ENCODE measurements at regions of chr16 and their contacts with region 1.

Region 1: GRCh38 chr16:53346-54236 is at the starts of genes POLR3K and SNRNP25:
- DNase-seq: peak; percentile 95 to 99 (median 98)
- ATAC-seq: peak; percentile 95
- H3K4me3 ChIP-seq: peak within 1 kb of the TSS; percentile 86
- H3K4me3 Mint-ChIP-seq: peak within 1 kb of the TSS; percentile 94
- H3K27ac ChIP-seq: peak within 1 kb of the TSS; percentile 25 to 31
- H3K27ac Mint-ChIP-seq: peak within 1 kb of the TSS; percentile 72
- H3K4me1 ChIP-seq: peaks cover 33% of the 10 kb centered on the region
- H3K4me1 Mint-ChIP-seq: peaks cover 32% of the 10 kb centered on the region
- H3K27me3 ChIP-seq: no peaks in the 10 kb centered on the region
- H3K27me3 Mint-ChIP-seq: no peaks in the 10 kb centered on the region
- CTCF ChIP-seq: no peak
- total RNA-seq, gene POLR3K: 4.1 TPM
- total RNA-seq, gene SNRNP25: 4.8 to 5.1 TPM

Region 2: DNA sequence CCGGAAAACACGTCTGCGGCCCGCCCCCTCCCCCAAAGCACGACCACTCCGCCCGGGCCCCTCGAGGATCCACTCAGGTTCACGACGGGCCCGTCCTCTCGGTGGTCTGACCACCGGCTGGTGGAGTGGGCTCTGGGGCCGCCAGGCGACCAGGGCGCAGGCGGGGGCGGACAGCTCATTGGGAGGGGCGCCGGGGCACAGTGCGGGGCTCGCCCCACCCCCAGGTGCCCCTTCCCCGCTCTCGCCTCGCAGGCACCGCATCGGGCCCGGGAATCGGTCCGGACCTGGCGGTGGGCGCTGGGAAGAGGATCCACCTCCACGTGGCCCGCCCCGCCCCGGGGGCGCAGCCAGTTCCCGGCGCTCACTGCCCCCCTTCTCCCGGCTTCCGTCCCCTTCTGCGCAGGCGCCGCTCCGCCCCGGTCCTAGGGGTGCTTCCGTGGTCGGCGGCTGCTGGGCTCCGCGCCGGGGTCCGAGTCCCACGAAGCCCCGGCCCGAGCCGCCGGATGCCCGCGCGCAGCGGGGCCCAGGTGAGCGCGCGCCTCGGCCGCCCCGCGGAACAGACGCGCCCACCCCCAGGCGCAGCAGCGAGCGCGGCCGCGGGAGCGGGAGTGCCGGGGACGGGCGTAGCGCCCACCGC is 24.3 kb after region 1 on chr16 and contains the start of gene MPG:
- CTCF ChIA-PET with region 1: no interaction called
- POLR2A ChIA-PET with region 1: interaction called, 6 read pairs
- intact Hi-C with region 1: loop called in 1 of 2 experiments (anchors 2 kb)
- DNase-seq: peak; percentile 62 to 89 (median 80)
- ATAC-seq: peak; percentile 88
- H3K4me3 ChIP-seq: peak within 1 kb of the TSS; percentile 73
- H3K4me3 Mint-ChIP-seq: peak within 1 kb of the TSS; percentile 91
- H3K27ac ChIP-seq: peak within 1 kb of the TSS in 1 of 2 donors; percentile 40
- H3K27ac Mint-ChIP-seq: peak within 1 kb of the TSS; percentile 77
- H3K4me1 ChIP-seq: peaks cover 34% of the 10 kb centered on the region
- H3K4me1 Mint-ChIP-seq: peaks cover 28% of the 10 kb centered on the region
- H3K27me3 ChIP-seq: peaks cover 7 to 13% of the 10 kb centered on the region in 2 experiments
- H3K27me3 Mint-ChIP-seq: peaks cover 20% of the 10 kb centered on the region
- CTCF ChIP-seq: no peak
- total RNA-seq, gene MPG: 14.1 to 17.1 TPM

Measured in CD4-positive, alpha-beta T cell (primary cell).